Activated CD4-positive, alpha-beta T cell treated with anti-CD3 and anti-CD28 coated beads, Interleukin-2, amount 10 ng/mL, durations not matched to agents 24 days and 14 days (primary cell): ENCODE measurements at regions of chr14 and their contacts with region 1.

Region 1: DNA sequence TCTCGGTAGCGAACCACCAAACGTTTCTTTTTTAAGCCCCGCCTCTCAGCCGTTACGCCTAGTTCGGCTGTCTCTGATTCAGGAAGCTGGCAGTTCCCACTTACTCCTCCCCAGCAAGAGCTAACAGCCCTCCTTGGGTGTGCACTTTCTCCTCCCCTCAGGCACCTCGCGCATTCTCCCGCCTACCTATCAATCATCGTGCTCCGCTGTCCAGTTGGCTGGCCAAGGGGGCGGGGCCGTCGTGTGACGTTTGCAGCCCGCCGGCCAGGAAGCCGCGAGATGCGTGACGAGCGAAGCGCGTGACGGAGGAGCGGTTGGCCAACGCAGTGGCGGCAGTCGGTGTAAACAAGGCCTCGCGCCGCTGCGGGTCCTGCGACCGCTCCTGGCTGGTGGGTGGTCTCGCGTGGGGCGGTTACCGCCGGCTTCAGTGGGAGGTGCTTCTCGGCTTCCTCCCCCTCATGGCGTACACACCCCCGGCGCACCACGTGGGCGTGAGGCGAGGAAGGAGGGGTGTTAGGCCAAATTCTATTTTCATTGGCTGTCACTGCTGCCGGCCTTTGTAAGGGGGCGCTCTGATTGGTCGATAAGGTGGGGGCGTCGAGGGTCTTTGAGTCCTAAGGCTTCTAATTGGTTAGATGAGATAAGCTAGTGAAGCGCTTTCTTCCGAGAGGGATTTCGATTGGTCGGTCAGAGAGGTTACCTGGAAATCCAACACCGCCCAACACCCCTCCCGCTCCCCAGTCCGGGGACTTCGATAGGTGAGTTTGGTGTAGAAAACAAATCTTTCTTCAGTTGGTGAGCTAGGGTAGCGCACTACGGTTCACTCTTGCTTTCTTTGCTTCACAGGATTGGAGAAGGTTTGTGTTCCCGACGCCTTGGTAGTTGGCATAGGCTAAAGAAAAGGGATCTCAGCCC is at the starts of genes DCAF11 and NRL:
- DNase-seq: peak; percentile 99
- H3K4me3 Mint-ChIP-seq: peak within 1 kb of the TSS; percentile 99
- H3K27ac Mint-ChIP-seq: peak within 1 kb of the TSS; percentile 100
- H3K4me1 Mint-ChIP-seq: peaks cover 34% of the 10 kb centered on the region
- H3K27me3 Mint-ChIP-seq: peaks cover 2% of the 10 kb centered on the region
- total RNA-seq, gene DCAF11: 55.8 and 57.3 TPM in 2 replicates
- total RNA-seq, gene NRL: 0.96 and 1.2 TPM in 2 replicates

Region 2: GRCh38 chr14:24013654-24014514 is 100.9 kb before region 1 on chr14:
- intact Hi-C with region 1: loop called (anchors 1 kb)
- DNase-seq: peak; percentile 90
- H3K4me3 Mint-ChIP-seq: no peak overlapping the region
- H3K27ac Mint-ChIP-seq: no peak overlapping the region
- H3K4me1 Mint-ChIP-seq: peaks cover 22% of the 10 kb centered on the region
- H3K27me3 Mint-ChIP-seq: peaks cover 18% of the 10 kb centered on the region

Region 3: GRCh38 chr14:24093901-24094761 is 20.7 kb before region 1 on chr14 and contains the start of gene PCK2:
- intact Hi-C with region 1: loop called (anchors 1 kb)
- DNase-seq: peak; percentile 93
- H3K4me3 Mint-ChIP-seq: peak within 1 kb of the TSS; percentile 94
- H3K27ac Mint-ChIP-seq: peak within 1 kb of the TSS; percentile 94
- H3K4me1 Mint-ChIP-seq: peaks cover 34% of the 10 kb centered on the region
- H3K27me3 Mint-ChIP-seq: no peaks in the 10 kb centered on the region
- total RNA-seq, gene PCK2: 63.6 and 64.2 TPM in 2 replicates

Region 4: DNA sequence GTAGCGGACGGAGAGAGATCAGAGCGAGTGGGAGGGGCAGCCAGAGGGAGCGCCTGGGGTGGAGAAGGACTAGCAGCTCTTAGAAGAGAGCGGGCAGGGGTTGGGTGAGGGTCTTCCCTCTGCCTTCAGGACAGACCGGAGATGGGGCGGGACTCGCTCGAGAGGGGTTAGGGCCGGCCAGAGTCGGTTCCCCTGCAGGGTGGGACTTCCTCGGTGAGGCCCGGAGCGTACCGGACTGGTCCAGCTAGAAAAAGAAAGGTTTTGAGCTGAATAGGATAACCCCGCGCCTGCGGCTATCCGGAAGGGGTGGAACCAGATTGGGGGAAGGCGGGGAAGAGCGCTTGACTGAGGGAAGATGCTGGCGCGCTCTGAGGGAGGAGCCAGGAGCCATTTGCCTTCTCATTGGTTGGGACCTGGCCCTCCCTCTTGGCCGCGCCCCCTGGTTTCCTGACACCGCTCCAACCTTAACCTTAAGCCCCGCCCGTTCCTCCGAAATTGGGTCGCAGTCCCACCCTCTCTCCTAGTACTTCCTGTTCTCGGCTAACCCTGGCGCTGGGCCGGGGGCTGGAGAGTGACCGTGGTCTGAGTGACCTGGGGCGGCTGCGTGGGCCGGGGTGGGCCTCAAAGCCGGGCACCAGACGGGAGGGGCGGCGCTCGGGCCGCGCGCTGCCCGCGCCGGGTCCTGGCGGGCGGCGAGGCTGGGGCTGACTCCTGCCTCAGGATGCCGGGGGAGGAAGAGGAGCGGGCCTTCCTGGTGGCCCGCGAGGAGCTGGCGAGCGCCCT is 32.4 kb after region 1 on chr14 and contains the start of gene RNF31:
- intact Hi-C with region 1: loop called (anchors 1 kb)
- DNase-seq: peak; percentile 99
- H3K4me3 Mint-ChIP-seq: peak within 1 kb of the TSS; percentile 97
- H3K27ac Mint-ChIP-seq: peak within 1 kb of the TSS; percentile 99
- H3K4me1 Mint-ChIP-seq: peaks cover 59% of the 10 kb centered on the region
- H3K27me3 Mint-ChIP-seq: no peaks in the 10 kb centered on the region
- total RNA-seq, gene RNF31: 95.1 and 95.6 TPM in 2 replicates

Region 5: GRCh38 chr14:24171422-24172260 is 56.8 kb after region 1 on chr14 and contains the start of gene REC8:
- intact Hi-C with region 1: no loop called
- DNase-seq: peak; percentile 76
- H3K4me3 Mint-ChIP-seq: peak within 1 kb of the TSS; percentile 72
- H3K27ac Mint-ChIP-seq: peak within 1 kb of the TSS; percentile 83
- H3K4me1 Mint-ChIP-seq: peaks cover 26% of the 10 kb centered on the region
- H3K27me3 Mint-ChIP-seq: no peaks in the 10 kb centered on the region
- total RNA-seq, gene REC8: 33.8 and 34.3 TPM in 2 replicates

Region 6: GRCh38 chr14:24215495-24216344 is 100.9 kb after region 1 on chr14 and contains the start of gene MDP1:
- intact Hi-C with region 1: loop called (anchors 1 kb)
- DNase-seq: peak; percentile 96
- H3K4me3 Mint-ChIP-seq: peak within 1 kb of the TSS; percentile 93
- H3K27ac Mint-ChIP-seq: peak within 1 kb of the TSS; percentile 96
- H3K4me1 Mint-ChIP-seq: peaks cover 43% of the 10 kb centered on the region
- H3K27me3 Mint-ChIP-seq: peaks cover 2% of the 10 kb centered on the region
- total RNA-seq, gene MDP1: 11.6 and 13.5 TPM in 2 replicates